Activated naive CD4-positive, alpha-beta T cell treated with anti-CD3 and anti-CD28 coated beads for 36 hours (primary cell): ENCODE measurements at regions of chr12 and their contacts with region 1.

Region 1: GRCh38 chr12:124940549-124941527 is 26.4 kb upstream of the UBC start:
- DNase-seq: peak; percentile 96
- H3K4me3 Mint-ChIP-seq: no peak overlapping the region
- H3K27ac Mint-ChIP-seq: no peak overlapping the region
- H3K4me1 Mint-ChIP-seq: peaks cover 8% of the 10 kb centered on the region
- H3K27me3 Mint-ChIP-seq: no peaks in the 10 kb centered on the region

Region 2: GRCh38 chr12:124898200-124898922 is 42.5 kb before region 1 on chr12:
- CTCF ChIA-PET with region 1: interaction called, 10 read pairs
- intact Hi-C with region 1: no loop called
- DNase-seq: peak; percentile 82
- H3K4me3 Mint-ChIP-seq: peak overlapping the region; percentile 34
- H3K27ac Mint-ChIP-seq: no peak overlapping the region
- H3K4me1 Mint-ChIP-seq: peaks cover 12% of the 10 kb centered on the region
- H3K27me3 Mint-ChIP-seq: no peaks in the 10 kb centered on the region

Region 3: DNA sequence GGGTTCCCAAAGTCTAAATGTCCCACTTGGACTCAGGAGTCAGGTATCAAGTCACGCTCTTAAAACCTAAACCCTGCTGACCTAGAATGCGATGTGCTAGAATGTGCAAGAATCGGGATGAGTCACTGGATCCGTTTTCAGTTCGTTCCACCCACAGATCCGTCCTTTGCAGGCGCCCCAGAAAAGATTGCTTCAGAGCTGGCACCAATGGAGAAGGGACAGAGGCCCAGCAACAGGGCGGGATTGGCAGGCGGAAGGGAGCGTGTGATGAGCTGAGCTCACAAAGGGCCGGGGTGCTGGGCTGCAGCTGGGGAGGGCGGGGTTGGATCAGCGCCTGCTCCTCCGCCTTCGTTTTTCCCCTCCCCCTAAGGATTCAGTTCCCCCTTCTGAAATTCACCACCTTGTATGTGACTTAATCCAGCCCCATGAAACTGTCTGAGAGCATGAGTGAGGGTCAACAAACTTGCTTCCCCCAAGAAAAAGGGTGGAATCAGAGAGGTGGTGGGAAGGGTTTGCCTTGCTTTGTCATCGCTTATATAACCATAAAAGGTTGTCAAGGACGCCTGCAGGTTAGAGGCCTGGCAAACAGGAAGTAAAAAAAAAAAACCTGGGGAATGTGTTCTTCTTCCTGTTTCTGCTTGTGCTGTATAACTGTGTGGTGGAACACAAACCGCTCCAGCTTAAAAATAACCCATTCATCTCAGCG is 23.6 kb before region 1 on chr12:
- CTCF ChIA-PET with region 1: interaction called, 113 read pairs
- intact Hi-C with region 1: loop called (anchors 1 kb)
- DNase-seq: peak; percentile 98
- H3K4me3 Mint-ChIP-seq: peak overlapping the region; percentile 73
- H3K27ac Mint-ChIP-seq: peak overlapping the region; percentile 100
- H3K4me1 Mint-ChIP-seq: peaks cover 83% of the 10 kb centered on the region
- H3K27me3 Mint-ChIP-seq: peaks cover 6% of the 10 kb centered on the region

Region 4: DNA sequence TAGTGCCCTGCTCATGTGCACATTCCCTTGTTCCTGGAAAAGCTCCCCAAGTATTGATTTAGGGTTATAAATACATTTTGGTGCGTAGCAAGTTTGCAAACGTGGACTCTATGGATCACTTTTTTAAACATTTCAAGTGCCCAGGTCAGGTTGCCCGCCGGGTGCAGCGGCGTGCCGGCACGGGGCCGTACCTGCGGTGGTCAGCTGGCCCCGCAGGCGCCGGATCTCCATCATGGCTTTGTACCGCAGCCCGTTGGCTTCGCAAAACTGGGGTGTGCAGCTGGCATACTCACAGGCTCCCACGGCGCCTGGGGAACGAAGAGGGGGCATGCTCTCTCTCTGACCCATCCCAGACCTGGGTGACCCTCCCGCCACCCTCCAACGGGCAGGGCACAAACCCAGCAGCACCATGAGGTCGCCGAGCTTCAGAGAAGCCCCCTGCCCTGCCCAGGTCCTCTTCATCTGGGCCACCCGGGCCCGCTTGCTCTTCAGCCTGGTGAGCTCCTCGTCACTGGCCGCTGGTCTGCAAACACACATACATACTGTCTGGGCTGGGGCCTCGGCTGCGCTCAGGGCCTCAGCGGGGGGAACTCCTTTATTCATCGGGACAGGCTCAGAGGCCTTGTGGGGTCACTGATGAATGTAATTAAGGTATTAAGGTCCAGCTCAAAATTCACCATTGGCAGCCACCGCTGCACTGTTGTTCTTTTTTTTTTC is 13.0 kb after region 1 on chr12:
- CTCF ChIA-PET with region 1: interaction called, 10 read pairs
- intact Hi-C with region 1: no loop called
- DNase-seq: no peak
- H3K4me3 Mint-ChIP-seq: no peak overlapping the region
- H3K27ac Mint-ChIP-seq: no peak overlapping the region
- H3K4me1 Mint-ChIP-seq: no peaks in the 10 kb centered on the region
- H3K27me3 Mint-ChIP-seq: no peaks in the 10 kb centered on the region

Region 5: DNA sequence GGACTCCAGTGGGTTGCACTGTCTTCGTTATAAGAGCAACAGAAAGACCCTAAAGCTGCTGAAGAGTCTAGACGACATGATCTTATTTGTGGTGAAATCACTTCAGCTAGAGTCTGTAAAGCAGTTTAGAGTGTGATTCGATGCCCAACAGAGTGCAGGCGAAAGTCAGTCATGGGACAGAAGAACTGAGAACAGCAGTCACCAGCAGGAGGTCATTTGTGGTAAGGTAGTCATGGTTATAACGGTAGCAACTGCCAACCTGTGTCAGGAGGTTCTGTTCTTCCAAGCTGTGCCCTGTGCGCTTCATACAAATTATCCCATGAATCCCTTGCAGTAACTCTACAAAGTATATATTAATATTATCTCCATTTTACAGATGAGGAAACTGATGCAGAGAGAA is 1078.5 kb after region 1 on chr12:
- CTCF ChIA-PET with region 1: no interaction called
- intact Hi-C with region 1: no loop called
- DNase-seq: no peak
- H3K4me3 Mint-ChIP-seq: no peak overlapping the region
- H3K27ac Mint-ChIP-seq: no peak overlapping the region
- H3K4me1 Mint-ChIP-seq: no peaks in the 10 kb centered on the region
- H3K27me3 Mint-ChIP-seq: no peaks in the 10 kb centered on the region